Spleen (tissue), 13 donors: ENCODE measurements at regions of chr11 and their contacts with region 1.

Region 1: GRCh38 chr11:60615497-60615896 is 83.9 kb upstream of the MS4A8 start:
- DNase-seq: no peak
- H3K4me3 ChIP-seq: no peak overlapping the region
- H3K27ac ChIP-seq: no peak overlapping the region
- H3K4me1 ChIP-seq: peaks cover 0 to 8% (median 0%) of the 10 kb centered on the region in 6 donors
- H3K27me3 ChIP-seq: no peaks in the 10 kb centered on the region
- CTCF ChIP-seq: no peak
- POLR2A ChIP-seq: no peak

Region 2: GRCh38 chr11:60265373-60266214 is 349.9 kb before region 1 on chr11:
- intact Hi-C with region 1: loop called (anchors 10 kb)
- DNase-seq: no peak
- H3K4me3 ChIP-seq: no peak overlapping the region
- H3K27ac ChIP-seq: peak overlapping the region in 1 of 8 donors; percentile 1
- H3K4me1 ChIP-seq: peaks cover 0 to 12% (median 0%) of the 10 kb centered on the region in 6 donors
- H3K27me3 ChIP-seq: no peaks in the 10 kb centered on the region
- CTCF ChIP-seq: peak; percentile 36 to 77 (median 69)
- POLR2A ChIP-seq: no peak

Region 3: GRCh38 chr11:60334005-60334620 is 281.4 kb before region 1 on chr11:
- intact Hi-C with region 1: loop called (anchors 10 kb)
- DNase-seq: no peak
- H3K4me3 ChIP-seq: no peak overlapping the region
- H3K27ac ChIP-seq: peak overlapping the region in 4 of 8 donors; percentile 26 to 37 (median 28)
- H3K4me1 ChIP-seq: peaks cover 0 to 22% (median 2%) of the 10 kb centered on the region in 6 donors
- H3K27me3 ChIP-seq: no peaks in the 10 kb centered on the region
- CTCF ChIP-seq: peak; percentile 18 to 85 (median 73)
- POLR2A ChIP-seq: no peak

Region 4: DNA sequence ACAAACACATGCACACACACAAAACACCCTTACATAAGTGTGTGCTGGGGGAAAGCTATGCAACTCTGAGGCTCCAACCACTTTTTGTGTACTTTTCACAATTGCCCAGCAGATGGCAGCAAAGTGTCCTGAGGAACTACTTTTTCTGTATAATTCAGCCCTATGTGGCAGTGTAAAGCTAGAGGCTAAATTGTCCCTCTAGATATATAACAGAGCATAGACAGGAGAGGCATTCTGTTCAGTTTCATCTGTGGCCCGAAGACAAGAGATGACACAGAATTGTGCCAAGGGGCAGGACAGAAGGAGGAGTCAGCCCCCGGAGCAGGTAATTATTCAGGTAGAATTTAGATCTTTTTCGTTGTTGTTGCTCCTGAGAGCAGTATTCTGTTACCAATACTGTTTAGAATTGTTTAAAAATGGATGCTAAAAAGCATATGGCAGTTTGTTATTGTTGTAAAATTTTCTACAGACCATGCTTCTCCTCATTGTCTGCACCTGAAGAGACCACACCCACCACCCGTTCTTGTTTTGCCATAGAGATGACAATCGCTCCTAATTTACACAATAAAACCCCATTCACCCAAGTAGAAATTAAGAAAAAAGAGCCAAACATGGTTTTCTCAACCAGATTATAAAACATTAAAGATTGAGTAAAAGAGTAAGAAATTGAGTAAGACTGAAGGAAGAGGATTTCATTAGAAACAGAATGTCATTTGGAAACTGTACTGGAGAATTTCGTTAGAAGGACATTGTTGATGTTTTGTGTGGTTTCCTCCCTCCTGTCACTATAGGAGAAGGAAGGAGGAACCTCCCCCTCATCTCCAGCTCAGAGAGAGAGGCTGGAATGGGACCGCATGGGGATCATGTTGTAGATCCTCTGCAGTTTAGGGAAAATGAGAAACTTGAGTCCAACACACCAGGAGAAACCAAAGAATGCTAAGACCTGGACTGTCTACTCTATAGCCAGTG is 251.7 kb before region 1 on chr11:
- intact Hi-C with region 1: loop called (anchors 10 kb)
- DNase-seq: no peak
- H3K4me3 ChIP-seq: peak overlapping the region in 4 of 8 donors; percentile 0 to 60 (median 16)
- H3K27ac ChIP-seq: peak overlapping the region; percentile 16 to 89 (median 80)
- H3K4me1 ChIP-seq: peaks cover 0 to 61% (median 26%) of the 10 kb centered on the region in 6 donors
- H3K27me3 ChIP-seq: no peaks in the 10 kb centered on the region
- CTCF ChIP-seq: peak; percentile 59 to 84 (median 76)
- POLR2A ChIP-seq: no peak